ENCODE measurements at regions of chr12 and their contacts with region 1.

Region 1: DNA sequence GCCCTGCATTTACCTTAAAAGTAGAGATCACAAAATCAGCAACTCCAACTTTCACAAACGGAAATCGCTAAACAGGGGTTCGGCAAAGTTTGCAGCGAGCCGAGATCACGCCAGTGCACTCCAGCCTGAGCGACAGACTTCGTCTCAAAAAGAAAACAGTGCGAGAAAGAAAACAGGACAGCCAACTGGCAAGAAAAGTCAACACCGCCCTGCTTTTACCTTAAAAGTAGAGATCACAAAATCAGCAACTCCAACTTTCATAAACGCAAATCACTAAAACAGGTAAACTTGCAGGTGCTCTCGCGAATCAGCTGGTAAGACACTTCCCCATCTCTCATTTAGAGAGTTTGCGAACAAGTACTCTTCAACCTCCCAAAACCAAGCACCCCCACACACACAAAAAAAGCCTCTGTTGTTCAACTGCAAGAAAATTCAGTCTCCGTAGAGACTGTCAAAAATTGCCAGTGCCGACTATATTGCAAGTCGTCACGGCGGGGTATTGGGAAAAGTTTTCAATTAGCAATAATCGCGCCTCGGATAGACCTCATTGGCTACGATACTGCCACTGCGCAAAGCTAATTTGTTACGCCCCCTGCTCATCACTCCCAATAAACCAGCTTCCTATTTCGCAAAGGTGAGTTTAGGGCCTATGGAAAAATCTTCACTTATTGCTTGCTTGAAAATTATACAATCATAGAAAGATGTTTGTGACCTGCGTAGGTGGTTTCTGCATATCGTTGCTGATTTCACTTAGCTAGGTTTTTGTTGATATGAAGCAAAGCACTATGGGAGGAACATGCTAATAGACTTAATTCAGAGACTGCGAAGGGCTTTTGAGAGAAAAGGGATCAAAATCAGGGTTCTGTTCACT is at the start of gene RNU4-1:
- DNase-seq: peak; percentile 62
- ATAC-seq: peak; percentile 58
- H3K4me3 Mint-ChIP-seq: no peak within 1 kb of the TSS
- H3K27ac Mint-ChIP-seq: no peak within 1 kb of the TSS
- H3K4me1 Mint-ChIP-seq: peaks cover 9% of the 10 kb centered on the region
- H3K27me3 Mint-ChIP-seq: no peaks in the 10 kb centered on the region; the same call in 1 of the 2 replicates
- CTCF ChIP-seq: no peak
- total RNA-seq, gene RNU4-1: 2,196 to 2,477 TPM (median 2,436 TPM) in 3 replicates

Region 2: DNA sequence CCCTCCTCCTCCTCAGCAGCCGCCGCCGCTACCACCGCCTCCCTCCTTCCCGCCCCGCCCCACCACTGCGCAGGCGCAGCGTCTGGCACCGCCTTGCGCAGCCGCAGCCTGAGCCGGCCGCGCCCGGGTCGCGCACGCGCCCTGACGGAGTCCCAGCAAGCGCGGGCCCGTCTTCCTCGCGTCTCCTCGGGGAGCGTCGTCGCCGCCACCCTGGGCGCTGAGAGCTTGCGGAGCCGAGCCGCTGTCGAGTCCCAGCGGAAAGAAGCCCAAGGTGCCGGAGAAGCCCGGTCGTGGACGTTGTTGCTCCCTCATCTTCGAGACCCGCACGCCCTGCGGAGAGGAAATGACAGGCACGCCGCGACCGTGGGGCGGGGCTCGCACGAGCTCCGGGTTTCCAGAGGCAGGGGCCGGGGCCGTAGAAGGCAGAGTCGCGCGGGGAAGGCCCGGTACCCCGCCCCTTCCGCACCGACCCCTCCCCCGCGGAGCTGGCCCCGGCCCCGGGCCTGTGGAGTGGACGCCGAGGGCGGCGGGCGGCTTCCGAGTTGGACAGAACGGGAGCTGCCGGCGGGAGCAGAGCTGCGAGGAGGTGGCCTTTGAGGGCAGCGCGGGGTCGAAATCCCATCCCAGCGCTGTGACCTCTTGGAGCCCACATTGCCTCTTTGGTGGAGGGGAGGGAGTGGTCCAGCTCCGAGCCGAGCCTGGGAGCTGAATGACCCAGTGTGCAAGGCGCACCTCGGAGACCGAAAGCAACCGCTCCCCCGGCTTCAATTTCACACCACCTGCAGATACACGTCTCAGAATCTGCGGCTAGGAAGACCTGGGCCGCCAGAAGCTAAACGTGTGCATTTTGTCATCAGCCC is 175.9 kb before region 1 on chr12:
- CTCF ChIA-PET with region 1: interaction called, 5 read pairs
- POLR2A ChIA-PET with region 1: interaction called, 11 read pairs
- DNase-seq: peak; percentile 98
- ATAC-seq: peak; percentile 83
- H3K4me3 Mint-ChIP-seq: peak overlapping the region; percentile 82
- H3K27ac Mint-ChIP-seq: peak overlapping the region; percentile 89
- H3K4me1 Mint-ChIP-seq: peaks cover 31% of the 10 kb centered on the region
- H3K27me3 Mint-ChIP-seq: no peaks in the 10 kb centered on the region; the same call in 1 of the 2 replicates
- CTCF ChIP-seq: no peak

Region 3: DNA sequence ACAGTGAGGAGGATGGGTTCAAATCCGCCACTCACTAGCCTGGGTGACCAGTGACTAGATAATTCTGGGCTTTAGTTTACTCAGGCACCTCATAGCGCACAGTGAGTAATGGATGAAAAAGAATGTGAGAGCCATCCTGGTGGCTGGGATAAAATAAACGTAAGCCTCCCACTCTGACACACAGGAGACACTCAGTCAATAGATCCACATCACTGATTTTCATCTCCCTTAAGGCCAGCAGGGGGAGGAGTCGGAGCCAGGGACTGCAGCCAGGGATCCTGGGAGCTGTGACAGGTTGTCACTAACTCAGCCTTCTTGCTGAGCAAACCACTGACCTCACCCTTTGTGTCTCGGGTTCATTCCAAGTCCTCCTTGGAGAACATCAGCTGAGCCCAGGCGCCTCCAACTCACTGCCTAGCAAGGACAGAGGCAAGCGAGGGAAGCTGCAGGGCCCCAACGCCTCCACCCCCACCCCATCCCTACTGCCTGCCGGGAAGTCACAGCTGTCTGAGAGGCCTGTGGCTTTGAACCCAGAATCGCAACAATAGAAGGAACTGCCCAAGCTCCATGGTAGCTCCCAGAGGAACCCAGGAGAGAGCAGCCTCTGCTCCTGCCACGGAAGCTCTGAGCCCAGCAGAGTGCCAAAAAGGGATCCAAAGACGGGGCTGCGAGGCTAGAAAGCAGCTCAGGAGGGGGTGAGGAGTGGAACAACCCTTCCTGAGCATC is 58.1 kb before region 1 on chr12:
- CTCF ChIA-PET with region 1: interaction called, 145 read pairs
- POLR2A ChIA-PET with region 1: interaction called, 157 read pairs
- DNase-seq: peak; percentile 36
- ATAC-seq: peak; percentile 2
- H3K4me3 Mint-ChIP-seq: no peak overlapping the region
- H3K27ac Mint-ChIP-seq: peak overlapping the region; percentile 80
- H3K4me1 Mint-ChIP-seq: peaks cover 73% of the 10 kb centered on the region
- H3K27me3 Mint-ChIP-seq: no peaks in the 10 kb centered on the region
- CTCF ChIP-seq: no peak

Region 4: DNA sequence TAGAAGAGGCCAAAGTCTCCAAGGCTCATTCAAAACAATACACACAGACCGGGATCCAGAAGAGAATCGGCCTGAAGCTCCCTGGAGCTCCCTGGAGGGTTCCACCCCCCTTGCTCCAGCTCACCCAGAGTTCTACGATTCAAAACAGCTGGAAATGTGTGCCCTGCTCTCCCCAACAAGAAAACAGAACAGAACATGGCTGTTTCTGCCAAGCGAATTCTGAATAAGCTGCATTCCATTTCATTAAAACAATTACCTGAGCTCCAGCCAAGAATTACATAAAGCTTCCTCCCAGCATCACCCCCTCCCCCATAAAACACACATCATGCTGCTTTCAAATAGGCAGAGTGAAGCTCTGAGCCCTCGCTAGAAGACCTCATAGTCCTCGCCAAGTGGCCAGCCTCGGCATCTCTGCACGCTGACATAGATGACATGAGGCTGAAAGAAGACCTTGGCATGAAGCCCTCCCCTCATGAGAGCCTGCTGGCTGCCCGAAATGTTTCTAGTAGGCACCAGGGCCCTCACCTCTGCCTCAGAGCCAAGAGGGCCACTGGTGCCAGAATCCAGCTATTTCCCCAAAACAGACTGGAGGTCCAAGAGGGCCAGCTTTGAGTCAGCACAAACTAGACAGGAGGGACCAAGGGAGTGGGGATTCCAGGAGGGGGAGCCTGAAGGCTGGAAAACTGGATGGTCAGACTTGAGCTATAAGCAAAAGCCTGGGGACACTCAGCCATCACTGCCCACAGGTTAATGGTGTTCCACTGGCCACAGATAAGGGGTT is 35.7 kb before region 1 on chr12:
- CTCF ChIA-PET with region 1: interaction called, 8 read pairs
- POLR2A ChIA-PET with region 1: interaction called, 22 read pairs
- DNase-seq: no peak
- ATAC-seq: peak; percentile 67
- H3K4me3 Mint-ChIP-seq: no peak overlapping the region
- H3K27ac Mint-ChIP-seq: peak overlapping the region; percentile 90
- H3K4me1 Mint-ChIP-seq: peaks cover 55% of the 10 kb centered on the region
- H3K27me3 Mint-ChIP-seq: no peaks in the 10 kb centered on the region
- CTCF ChIP-seq: no peak

Region 5: DNA sequence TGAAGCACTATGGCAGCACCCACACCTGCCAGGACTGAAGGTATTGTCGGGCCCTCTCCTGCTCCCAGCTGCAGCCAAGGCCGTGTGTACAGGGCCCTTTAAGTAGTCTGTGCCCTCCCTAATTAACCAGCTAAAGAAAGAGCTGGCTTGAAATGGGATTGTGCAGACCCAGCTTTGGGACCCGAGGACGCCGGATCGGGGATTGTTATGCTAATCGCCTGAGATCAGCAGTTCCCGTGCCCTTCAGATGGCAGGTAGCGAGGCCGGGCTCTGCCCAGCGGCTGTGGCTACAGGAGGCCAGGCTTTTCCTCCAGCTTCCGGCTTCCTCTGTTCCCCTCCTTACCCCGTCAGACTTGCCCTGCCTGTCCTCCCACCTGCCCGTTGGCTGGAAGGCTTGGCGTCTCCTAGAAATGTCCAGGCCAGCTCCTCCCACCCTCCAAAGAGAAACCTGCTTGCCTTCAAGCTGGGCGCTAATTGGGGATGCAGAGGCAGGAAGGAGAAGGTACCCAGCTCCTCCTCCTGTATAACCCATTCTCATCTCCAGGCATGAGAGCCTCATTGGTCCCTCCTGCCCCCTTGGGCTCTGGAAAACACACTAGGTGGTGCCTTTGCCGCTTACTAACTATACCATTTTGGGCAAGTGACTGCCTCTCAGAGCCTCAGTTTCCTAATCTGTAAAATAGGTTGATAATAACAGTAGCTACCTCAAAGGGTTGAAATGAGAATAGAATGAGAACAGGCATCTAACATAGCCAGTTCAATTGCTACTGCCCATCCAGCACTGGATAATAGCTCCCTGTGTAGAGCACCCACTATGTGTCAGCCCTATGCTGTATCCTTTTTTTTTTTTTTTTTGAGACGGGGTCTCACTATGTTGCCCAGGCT is 101.8 kb after region 1 on chr12:
- CTCF ChIA-PET with region 1: no interaction called
- POLR2A ChIA-PET with region 1: no interaction called
- DNase-seq: peak; percentile 79
- ATAC-seq: peak; percentile 98
- H3K4me3 Mint-ChIP-seq: peak overlapping the region; percentile 45
- H3K27ac Mint-ChIP-seq: peak overlapping the region; percentile 95
- H3K4me1 Mint-ChIP-seq: peaks cover 46% of the 10 kb centered on the region
- H3K27me3 Mint-ChIP-seq: no peaks in the 10 kb centered on the region
- CTCF ChIP-seq: no peak